H1 (cell line): ENCODE measurements at regions of chr6 and their contacts with region 1.

Region 1: GRCh38 chr6:122789182-122790027 is at the start of gene SMPDL3A:
- DNase-seq: peak; percentile 44 to 90
- H3K4me3 ChIP-seq: peak within 1 kb of the TSS; percentile 72 to 86 (median 80)
- H3K27ac ChIP-seq: peak within 1 kb of the TSS; percentile 60; the same call in 1 of the 2 replicates
- H3K4me1 ChIP-seq: peaks cover 3 to 24% (median 13%) of the 10 kb centered on the region in 4 experiments; a peak in 6 of 7 replicates
- H3K27me3 ChIP-seq: no peaks in the 10 kb centered on the region; a peak in 2 of 7 replicates
- CTCF ChIP-seq: peak; percentile 34 to 38 (median 36)
- EP300 ChIP-seq: no peak
- POLR2A ChIP-seq: peak; percentile 33 to 51; a peak in 2 of 3 replicates
- RAD21 ChIP-seq: peak in 1 of 2 experiments; percentile 10; a peak in 1 of 4 replicates
- total RNA-seq, gene SMPDL3A: 2.6 and 3.5 TPM in 2 replicates

Region 2: DNA sequence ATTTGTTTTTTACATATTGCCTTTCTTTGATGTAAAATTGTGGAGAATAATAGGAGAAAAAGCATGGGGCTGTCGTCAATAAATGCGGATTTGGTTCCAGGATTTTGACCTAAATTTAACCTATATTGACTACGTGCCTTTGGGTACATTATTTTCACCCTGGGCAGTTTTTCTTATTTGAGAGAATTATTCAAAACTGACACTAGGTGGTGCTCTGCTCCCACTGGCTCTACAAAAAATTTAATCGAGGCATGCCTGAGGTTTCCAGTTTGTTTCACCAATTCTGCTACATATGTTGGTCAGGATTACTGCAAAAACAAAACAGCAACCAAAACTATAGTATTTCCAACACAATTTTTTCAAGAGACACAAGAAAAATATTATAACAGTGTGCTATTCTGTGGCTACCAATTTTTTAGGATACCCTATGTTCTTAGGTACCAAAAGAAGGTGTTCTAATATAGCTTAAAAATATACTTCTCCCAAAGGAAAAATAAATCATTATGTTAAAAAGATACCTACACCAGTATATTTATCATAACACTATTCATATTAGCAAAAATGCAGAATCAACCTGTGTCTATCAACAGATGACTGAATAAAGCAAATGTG is 58.5 kb before region 1 on chr6:
- CTCF ChIA-PET with region 1: interaction called, 34 read pairs
- POLR2A ChIA-PET with region 1: no interaction called
- DNase-seq: no peak
- H3K4me3 ChIP-seq: no peak overlapping the region
- H3K27ac ChIP-seq: no peak overlapping the region
- H3K4me1 ChIP-seq: peaks cover 3 to 10% (median 7%) of the 10 kb centered on the region in 4 experiments; a peak in 5 of 7 replicates
- H3K27me3 ChIP-seq: no peaks in the 10 kb centered on the region
- CTCF ChIP-seq: peak in 2 of 3 experiments; percentile 54 to 76; a peak in 3 of 4 replicates
- EP300 ChIP-seq: no peak
- POLR2A ChIP-seq: no peak
- RAD21 ChIP-seq: peak; percentile 93

Region 3: GRCh38 chr6:122751326-122751725 is 38.1 kb before region 1 on chr6:
- CTCF ChIA-PET with region 1: interaction called, 16 read pairs
- POLR2A ChIA-PET with region 1: no interaction called
- DNase-seq: no peak
- H3K4me3 ChIP-seq: no peak overlapping the region
- H3K27ac ChIP-seq: no peak overlapping the region
- H3K4me1 ChIP-seq: peaks cover 0 to 4% (median 1%) of the 10 kb centered on the region in 4 experiments; a peak in 1 of 7 replicates
- H3K27me3 ChIP-seq: 0 out of 7 replicates have a peak, but pooled peaks cover 0 to 1% (median 0%) of the 10 kb centered on the region in 4 experiments
- CTCF ChIP-seq: no peak
- EP300 ChIP-seq: no peak
- POLR2A ChIP-seq: no peak
- RAD21 ChIP-seq: no peak

Region 4: GRCh38 chr6:122770835-122771601 is 18.4 kb before region 1 on chr6:
- CTCF ChIA-PET with region 1: interaction called, 10 read pairs
- POLR2A ChIA-PET with region 1: interaction called, 6 read pairs
- DNase-seq: no peak
- H3K4me3 ChIP-seq: no peak overlapping the region
- H3K27ac ChIP-seq: no peak overlapping the region
- H3K4me1 ChIP-seq: no peaks in the 10 kb centered on the region
- H3K27me3 ChIP-seq: no peaks in the 10 kb centered on the region
- CTCF ChIP-seq: peak in 2 of 3 experiments; percentile 32 to 36; a peak in 3 of 4 replicates
- EP300 ChIP-seq: no peak
- POLR2A ChIP-seq: no peak
- RAD21 ChIP-seq: peak; percentile 44 to 52